Common myeloid progenitor, CD34-positive (primary cell): ENCODE measurements at regions of chr1 and their contacts with region 1.

Region 1: DNA sequence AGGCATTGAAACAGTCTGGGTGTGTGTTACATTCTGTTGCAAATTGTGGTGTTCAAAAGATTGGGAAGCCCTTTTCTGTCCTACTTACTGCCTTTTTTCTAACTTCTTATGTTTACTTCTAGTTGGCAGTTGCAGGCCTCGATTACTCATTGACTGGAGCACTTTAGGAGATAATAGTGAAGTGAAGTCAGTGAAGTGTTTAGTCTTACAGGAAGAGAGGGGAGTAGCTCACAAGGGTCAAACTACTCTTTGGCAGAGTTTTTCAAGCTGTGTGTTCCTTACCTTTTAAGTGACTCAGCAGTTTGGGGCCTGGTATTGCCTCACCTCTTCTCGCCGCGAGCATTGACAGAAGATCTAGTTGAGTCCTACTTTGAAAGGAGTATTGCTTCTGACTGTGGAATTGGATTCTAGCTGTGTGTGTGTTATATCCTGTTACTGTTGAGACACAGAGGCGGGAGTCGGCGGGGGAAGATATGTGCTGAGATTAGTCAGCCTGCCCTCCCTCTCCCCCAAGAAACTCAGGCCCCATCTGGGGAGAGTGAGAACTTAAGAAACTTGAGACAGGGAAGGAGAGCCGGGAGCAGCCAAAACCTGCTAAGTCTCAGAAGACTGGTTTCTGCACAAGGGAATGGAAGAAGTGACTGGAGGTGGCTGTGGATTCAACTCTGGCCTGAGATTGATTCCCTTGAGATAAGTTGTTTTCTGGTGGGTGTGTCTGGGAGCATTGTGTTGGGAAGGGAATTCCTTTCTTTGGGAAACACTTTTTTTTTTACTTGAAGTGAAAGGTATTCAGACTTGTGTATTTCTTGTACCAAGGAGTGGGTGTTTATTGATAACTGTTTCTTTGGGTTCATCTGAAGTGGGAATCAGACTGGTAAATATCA is 19.4 kb downstream of the AHCYL1 start:
- DNase-seq: peak; percentile 26 to 74 (median 62)
- H3K4me3 ChIP-seq: no peak overlapping the region
- H3K27ac ChIP-seq: peak overlapping the region; percentile 22 to 50
- H3K4me1 ChIP-seq: peaks cover 0 to 17% (median 10%) of the 10 kb centered on the region in 4 experiments
- H3K27me3 ChIP-seq: no peaks in the 10 kb centered on the region

Region 2: GRCh38 chr1:109993885-109994284 is 10.1 kb before region 1 on chr1:
- CTCF ChIA-PET with region 1: interaction called, 21 read pairs
- POLR2A ChIA-PET with region 1: interaction called, 3 read pairs
- DNase-seq: peak in 1 of 3 donors; percentile 14
- H3K4me3 ChIP-seq: no peak overlapping the region
- H3K27ac ChIP-seq: no peak overlapping the region
- H3K4me1 ChIP-seq: peaks cover 0 to 7% (median 4%) of the 10 kb centered on the region in 4 experiments
- H3K27me3 ChIP-seq: no peaks in the 10 kb centered on the region

Region 3: GRCh38 chr1:110272045-110272444 is 268.1 kb after region 1 on chr1:
- CTCF ChIA-PET with region 1: no interaction called
- POLR2A ChIA-PET with region 1: no interaction called
- DNase-seq: no peak
- H3K4me3 ChIP-seq: no peak overlapping the region
- H3K27ac ChIP-seq: no peak overlapping the region
- H3K4me1 ChIP-seq: peaks cover 0 to 12% (median 10%) of the 10 kb centered on the region in 4 experiments
- H3K27me3 ChIP-seq: no peaks in the 10 kb centered on the region

Region 4: DNA sequence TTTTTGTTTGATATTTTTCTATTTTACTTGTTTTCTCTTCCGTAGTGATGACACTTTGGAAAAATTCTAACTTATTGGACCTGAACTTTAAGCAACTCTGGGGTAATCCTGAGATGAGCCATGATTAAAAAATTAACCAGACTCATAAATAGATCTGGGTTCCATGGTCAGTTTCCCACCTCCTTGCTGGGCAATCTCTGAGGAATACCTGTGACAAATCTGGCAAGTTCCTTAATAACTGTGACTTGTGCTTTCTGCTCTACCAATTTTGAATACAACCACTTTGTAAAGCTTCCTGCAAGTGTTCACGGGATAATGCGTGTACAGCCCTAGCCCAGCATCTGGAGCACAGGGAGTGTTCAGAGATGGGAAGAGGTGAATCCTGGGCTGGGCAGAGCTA is 1420.3 kb after region 1 on chr1:
- CTCF ChIA-PET with region 1: no interaction called
- POLR2A ChIA-PET with region 1: no interaction called
- DNase-seq: no peak
- H3K4me3 ChIP-seq: no peak overlapping the region
- H3K27ac ChIP-seq: no peak overlapping the region
- H3K4me1 ChIP-seq: no peaks in the 10 kb centered on the region
- H3K27me3 ChIP-seq: no peaks in the 10 kb centered on the region